OCI-LY7 (cell line): ENCODE measurements at regions of chr13 and their contacts with region 1.

Region 1: GRCh38 chr13:50626101-50626547 is 217.4 kb downstream of the DLEU7 start:
- DNase-seq: no peak
- H3K4me3 ChIP-seq: no peak overlapping the region
- H3K27ac ChIP-seq: no peak overlapping the region
- H3K4me1 ChIP-seq: no peaks in the 10 kb centered on the region
- CTCF ChIP-seq: no peak

Region 2: GRCh38 chr13:50654331-50654730 is 28.2 kb after region 1 on chr13:
- CTCF ChIA-PET with region 1: no interaction called
- POLR2A ChIA-PET with region 1: interaction called, 10 read pairs
- intact Hi-C with region 1: no loop called
- DNase-seq: no peak
- H3K4me3 ChIP-seq: no peak overlapping the region
- H3K27ac ChIP-seq: no peak overlapping the region
- H3K4me1 ChIP-seq: peaks cover 13% of the 10 kb centered on the region
- CTCF ChIP-seq: no peak